Heart right ventricle (tissue), 16 donors: ENCODE measurements at regions of chr6 and their contacts with region 1.

Region 1: DNA sequence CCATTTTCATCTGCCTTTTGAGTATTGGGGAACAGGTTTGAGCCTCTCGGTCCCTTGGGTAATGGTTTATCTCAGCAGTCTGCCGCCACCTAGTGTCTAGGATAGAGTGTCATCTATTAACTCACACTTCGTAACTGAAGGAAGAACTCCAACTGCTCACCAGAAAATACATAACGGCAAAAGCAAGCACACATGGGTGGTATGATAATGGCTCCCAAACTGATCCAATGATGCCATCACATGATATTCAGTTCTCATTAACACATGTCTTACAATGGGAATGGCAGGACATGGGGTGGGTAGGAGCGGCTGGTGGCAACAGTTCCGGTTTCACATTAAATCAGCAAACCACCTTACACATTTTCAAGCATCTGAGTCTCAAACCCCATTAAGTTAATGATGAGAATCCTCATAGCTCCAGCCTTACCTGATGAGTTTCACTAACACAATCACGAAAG is 110.7 kb upstream of the PHACTR1 start:
- DNase-seq: peak in 1 of 2 donors; percentile 59
- ATAC-seq: peak in 6 of 8 donors; percentile 62 to 81 (median 68)
- H3K4me3 ChIP-seq: no peak overlapping the region
- H3K27ac ChIP-seq: no peak overlapping the region
- H3K4me1 ChIP-seq: peaks cover 0 to 33% (median 12%) of the 10 kb centered on the region in 9 donors
- H3K27me3 ChIP-seq: no peaks in the 10 kb centered on the region
- CTCF ChIP-seq: peak; percentile 26 to 81 (median 74)

Region 2: GRCh38 chr6:11653028-11653583 is 952.8 kb before region 1 on chr6:
- intact Hi-C with region 1: loop called in 8 of 10 experiments (anchors 2 to 10 kb)
- DNase-seq: peak in 1 of 2 donors; percentile 31
- ATAC-seq: peak in 7 of 8 donors; percentile 27 to 68 (median 46)
- H3K4me3 ChIP-seq: no peak overlapping the region
- H3K27ac ChIP-seq: peak overlapping the region in 1 of 10 donors; percentile 61
- H3K4me1 ChIP-seq: peaks cover 0 to 67% (median 40%) of the 10 kb centered on the region in 9 donors
- H3K27me3 ChIP-seq: no peaks in the 10 kb centered on the region
- CTCF ChIP-seq: no peak

Region 3: GRCh38 chr6:12233693-12234571 is 372.0 kb before region 1 on chr6:
- intact Hi-C with region 1: loop called in 1 of 10 experiments (anchors 5 kb)
- DNase-seq: peak in 1 of 2 donors; percentile 56
- ATAC-seq: peak in 6 of 8 donors; percentile 56 to 77 (median 61)
- H3K4me3 ChIP-seq: no peak overlapping the region
- H3K27ac ChIP-seq: peak overlapping the region in 1 of 10 donors; percentile 27
- H3K4me1 ChIP-seq: peaks cover 0 to 36% (median 0%) of the 10 kb centered on the region in 9 donors
- H3K27me3 ChIP-seq: no peaks in the 10 kb centered on the region
- CTCF ChIP-seq: peak; percentile 35 to 85 (median 70)

Region 4: GRCh38 chr6:12295558-12296254 is 310.2 kb before region 1 on chr6:
- intact Hi-C with region 1: loop called (anchors 2 to 5 kb)
- DNase-seq: no peak
- ATAC-seq: no peak
- H3K4me3 ChIP-seq: peak overlapping the region in 1 of 10 donors; percentile 4
- H3K27ac ChIP-seq: no peak overlapping the region
- H3K4me1 ChIP-seq: peaks cover 0 to 35% (median 13%) of the 10 kb centered on the region in 9 donors
- H3K27me3 ChIP-seq: peaks cover 0 to 33% (median 15%) of the 10 kb centered on the region in 7 donors
- CTCF ChIP-seq: no peak

Region 5: GRCh38 chr6:12395898-12396297 is 210.0 kb before region 1 on chr6:
- intact Hi-C with region 1: loop called in 5 of 10 experiments (anchors 5 to 10 kb)
- DNase-seq: no peak
- ATAC-seq: no peak
- H3K4me3 ChIP-seq: no peak overlapping the region
- H3K27ac ChIP-seq: no peak overlapping the region
- H3K4me1 ChIP-seq: peaks cover 0 to 12% (median 0%) of the 10 kb centered on the region in 9 donors
- H3K27me3 ChIP-seq: no peaks in the 10 kb centered on the region
- CTCF ChIP-seq: peak in 6 of 9 donors; percentile 7 to 44 (median 29)

Region 6: DNA sequence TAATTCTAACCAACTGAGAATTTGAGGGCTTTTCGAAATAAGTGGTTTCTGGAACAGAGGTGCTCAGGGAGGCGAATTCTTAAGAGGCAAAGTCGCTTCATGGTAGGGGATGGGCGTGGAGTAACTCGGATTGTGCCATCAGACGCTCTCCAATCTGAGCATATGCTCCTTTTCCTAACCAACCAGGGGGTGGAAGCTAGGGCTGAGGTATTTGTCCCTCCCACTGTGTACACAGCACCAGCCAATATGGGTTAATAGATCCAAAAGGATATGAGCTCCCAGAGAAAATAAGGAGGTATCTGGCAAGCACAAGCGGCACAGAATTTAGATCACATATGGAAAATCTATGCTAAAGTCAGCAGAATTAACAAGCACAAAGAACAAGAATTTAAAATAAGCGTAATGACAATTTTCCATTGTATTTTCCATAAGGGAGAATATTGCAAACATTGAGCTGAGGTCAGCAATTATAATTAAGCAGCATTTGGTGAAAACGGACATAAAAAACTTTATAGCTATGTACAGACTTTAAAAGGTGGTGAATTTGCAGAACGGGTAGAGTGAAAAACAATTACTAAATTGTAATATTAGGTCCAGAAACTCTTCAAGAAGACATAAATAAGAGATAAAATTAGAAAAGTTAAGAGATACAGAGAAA is 55.6 kb after region 1 on chr6:
- intact Hi-C with region 1: no loop called
- DNase-seq: no peak
- ATAC-seq: no peak
- H3K4me3 ChIP-seq: no peak overlapping the region
- H3K27ac ChIP-seq: no peak overlapping the region
- H3K4me1 ChIP-seq: no peaks in the 10 kb centered on the region
- H3K27me3 ChIP-seq: peaks cover 0 to 12% (median 0%) of the 10 kb centered on the region in 7 donors
- CTCF ChIP-seq: no peak